Transverse colon (tissue), 4 donors: ENCODE measurements at regions of chr18 and their contacts with region 1.

Region 1: GRCh38 chr18:49561289-49562193 is at the start of gene LIPG:
- DNase-seq: peak; percentile 85
- H3K4me3 ChIP-seq: peak within 1 kb of the TSS; percentile 16 to 50 (median 37)
- H3K27ac ChIP-seq: peak within 1 kb of the TSS; percentile 48 to 82 (median 60)
- H3K4me1 ChIP-seq: peaks cover 9 to 51% (median 20%) of the 10 kb centered on the region in 4 donors
- H3K27me3 ChIP-seq: peaks cover 27% of the 10 kb centered on the region
- CTCF ChIP-seq: no peak
- EP300 ChIP-seq: no peak
- POLR2A ChIP-seq: peak; percentile 85
- total RNA-seq, gene LIPG: 4.9 to 11.5 (median 6.9) TPM

Region 2: DNA sequence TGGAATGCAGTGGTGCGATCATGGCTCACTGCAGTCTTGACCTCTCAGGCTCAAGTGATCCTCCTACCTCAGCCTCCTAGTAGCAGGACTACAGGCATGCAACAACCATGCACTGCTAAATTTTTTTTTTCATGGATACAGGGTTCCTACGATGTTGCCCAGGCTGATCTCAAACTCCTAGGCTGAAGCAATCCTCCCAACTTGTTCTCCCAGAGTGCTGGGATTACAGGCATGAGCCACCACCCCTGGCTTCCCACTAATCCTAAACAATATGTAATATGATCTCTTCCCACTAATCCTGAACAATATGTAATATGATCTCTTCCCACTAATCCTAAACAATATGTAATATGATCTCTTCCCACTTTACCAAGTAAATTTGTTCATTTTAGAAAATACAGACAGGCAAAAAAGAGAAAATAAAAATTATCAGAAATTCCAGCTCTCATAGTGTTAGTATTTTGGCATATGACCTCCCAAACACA is 40.8 kb before region 1 on chr18:
- in situ Hi-C with region 1: no loop called
- intact Hi-C with region 1: no loop called
- DNase-seq: no peak
- H3K4me3 ChIP-seq: no peak overlapping the region
- H3K27ac ChIP-seq: no peak overlapping the region
- H3K4me1 ChIP-seq: no peaks in the 10 kb centered on the region
- H3K27me3 ChIP-seq: no peaks in the 10 kb centered on the region
- CTCF ChIP-seq: no peak
- EP300 ChIP-seq: no peak
- POLR2A ChIP-seq: no peak

Region 3: DNA sequence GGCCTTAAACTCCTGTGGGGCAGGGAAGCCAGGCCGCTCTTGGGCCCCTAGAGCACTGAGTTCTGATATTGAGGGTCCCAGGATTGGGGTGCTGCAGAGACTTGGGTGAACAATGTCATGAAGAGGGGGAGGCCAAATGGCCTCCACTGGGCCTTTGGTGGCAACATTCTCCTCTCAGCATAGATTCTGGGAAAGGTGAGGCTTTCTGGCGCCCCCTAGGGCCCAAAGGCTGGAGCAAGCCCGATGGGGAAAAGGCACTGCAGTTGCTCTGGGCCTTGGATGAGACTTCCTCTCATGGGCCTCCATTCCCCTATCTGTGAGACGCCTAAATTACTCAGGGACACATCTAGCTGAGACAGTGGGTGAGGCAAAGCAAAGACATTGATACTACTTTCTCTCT is 167.0 kb after region 1 on chr18:
- in situ Hi-C with region 1: loop called in 2 of 4 experiments (anchors 25 kb)
- intact Hi-C with region 1: no loop called
- DNase-seq: peak; percentile 75
- H3K4me3 ChIP-seq: no peak overlapping the region
- H3K27ac ChIP-seq: no peak overlapping the region
- H3K4me1 ChIP-seq: peaks cover 0 to 22% (median 10%) of the 10 kb centered on the region in 4 donors
- H3K27me3 ChIP-seq: no peaks in the 10 kb centered on the region
- CTCF ChIP-seq: peak; percentile 49 to 61 (median 57)
- EP300 ChIP-seq: no peak
- POLR2A ChIP-seq: no peak

Region 4: DNA sequence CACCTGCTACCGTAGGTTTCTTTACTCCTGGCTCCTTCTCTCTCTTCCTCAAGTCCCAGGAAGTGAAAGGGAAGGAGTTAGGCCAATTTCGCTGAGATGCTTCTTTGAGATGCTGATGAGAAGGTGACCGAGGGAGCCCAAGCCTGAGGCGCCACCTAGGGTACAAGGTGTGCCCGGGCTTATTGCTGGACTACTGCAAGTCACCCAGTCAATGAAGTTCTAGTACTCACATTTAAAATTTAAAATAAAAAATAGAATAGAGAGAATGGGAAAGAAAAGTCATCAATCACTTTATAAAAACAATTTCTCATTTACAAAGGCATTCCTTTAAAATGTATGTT is 206.5 kb after region 1 on chr18:
- in situ Hi-C with region 1: loop called in 2 of 4 experiments (anchors 25 kb)
- intact Hi-C with region 1: no loop called
- DNase-seq: peak; percentile 70
- H3K4me3 ChIP-seq: no peak overlapping the region
- H3K27ac ChIP-seq: no peak overlapping the region
- H3K4me1 ChIP-seq: no peaks in the 10 kb centered on the region
- H3K27me3 ChIP-seq: no peaks in the 10 kb centered on the region
- CTCF ChIP-seq: peak; percentile 30 to 62 (median 55)
- EP300 ChIP-seq: no peak
- POLR2A ChIP-seq: no peak

Region 5: DNA sequence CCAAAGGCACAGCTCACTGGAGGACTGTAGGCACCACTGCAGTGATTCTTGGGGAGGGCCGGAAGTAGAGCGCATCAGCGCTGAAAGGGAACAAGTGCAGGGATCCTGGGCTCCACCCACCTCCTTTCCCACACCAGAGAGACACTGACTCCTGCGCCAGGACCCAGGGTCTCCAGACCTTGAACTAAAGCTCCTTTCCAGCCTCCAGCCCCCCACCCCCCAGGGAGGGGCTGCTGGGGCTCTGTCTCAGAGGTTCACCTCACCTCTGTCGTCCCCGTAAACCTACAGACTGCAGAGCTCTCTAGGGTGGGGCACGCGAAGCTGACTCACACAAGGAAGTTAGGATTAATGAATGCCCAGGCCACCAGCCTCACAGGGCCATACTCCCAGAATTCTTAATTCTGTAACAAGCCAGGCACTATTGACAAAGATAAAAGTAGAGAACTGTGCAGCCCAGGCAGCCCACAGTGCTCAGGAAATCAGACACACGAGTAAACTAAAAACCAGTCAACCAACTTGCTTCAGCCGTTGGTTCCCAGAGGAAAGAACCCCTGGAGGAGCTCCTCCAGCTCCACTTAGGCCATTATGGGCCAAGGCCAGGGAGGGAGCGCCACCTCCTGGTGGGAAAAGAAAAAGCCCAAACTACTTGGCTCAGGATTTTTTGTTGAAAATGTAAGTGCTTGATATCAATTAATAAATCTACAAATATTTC is 296.9 kb after region 1 on chr18:
- in situ Hi-C with region 1: no loop called
- intact Hi-C with region 1: loop called (anchors 5 kb)
- DNase-seq: peak; percentile 75
- H3K4me3 ChIP-seq: no peak overlapping the region
- H3K27ac ChIP-seq: peak overlapping the region; percentile 84 to 92 (median 86)
- H3K4me1 ChIP-seq: peaks cover 3 to 32% (median 17%) of the 10 kb centered on the region in 4 donors
- H3K27me3 ChIP-seq: no peaks in the 10 kb centered on the region
- CTCF ChIP-seq: peak; percentile 90 to 99 (median 94)
- EP300 ChIP-seq: no peak
- POLR2A ChIP-seq: peak; percentile 39